Dendritic cell treated with granulocyte-macrophage colony-stimulating factor and Interleukin-4, amounts not matched to agents 40 ng/mL and 50 ng/mL, for 4 days (primary cell): ENCODE measurements at regions of chr18 and their contacts with region 1.

Region 1: DNA sequence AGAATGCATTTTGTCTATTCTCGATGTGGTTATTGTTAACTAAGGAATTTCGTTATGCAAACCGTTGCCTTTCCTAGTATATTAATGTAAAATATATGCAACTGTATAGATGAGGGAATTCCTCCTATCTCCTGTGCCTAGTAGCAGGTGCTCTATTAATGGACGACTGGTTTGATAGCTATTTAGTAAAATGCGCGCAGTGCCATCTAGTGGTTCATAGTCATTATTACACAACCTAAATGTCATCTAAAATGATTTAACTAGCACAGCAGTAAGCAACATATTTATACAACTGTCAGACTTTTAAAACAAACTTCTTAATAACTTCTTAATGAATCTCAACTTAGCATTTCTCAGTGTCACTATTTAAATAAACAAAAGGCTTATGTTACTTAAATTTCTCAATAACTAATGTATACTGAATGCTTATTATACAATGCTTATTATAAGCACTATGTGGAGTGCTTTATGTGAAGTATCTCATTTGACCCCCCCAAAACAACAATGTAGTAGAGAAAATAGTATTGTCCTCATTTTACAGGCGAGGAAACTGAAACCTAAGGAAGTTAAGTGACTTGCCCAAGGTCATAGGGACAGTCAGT is 77.9 kb downstream of the DTNA start:
- H3K4me3 Mint-ChIP-seq: no peak overlapping the region
- H3K27ac Mint-ChIP-seq: no peak overlapping the region
- H3K4me1 Mint-ChIP-seq: peaks cover 4% of the 10 kb centered on the region
- H3K27me3 Mint-ChIP-seq: no peaks in the 10 kb centered on the region

Region 2: GRCh38 chr18:33231474-33232317 is 1556.3 kb before region 1 on chr18:
- intact Hi-C with region 1: loop called (anchors 10 kb)
- H3K4me3 Mint-ChIP-seq: no peak overlapping the region
- H3K27ac Mint-ChIP-seq: no peak overlapping the region
- H3K4me1 Mint-ChIP-seq: no peaks in the 10 kb centered on the region
- H3K27me3 Mint-ChIP-seq: no peaks in the 10 kb centered on the region

Region 3: DNA sequence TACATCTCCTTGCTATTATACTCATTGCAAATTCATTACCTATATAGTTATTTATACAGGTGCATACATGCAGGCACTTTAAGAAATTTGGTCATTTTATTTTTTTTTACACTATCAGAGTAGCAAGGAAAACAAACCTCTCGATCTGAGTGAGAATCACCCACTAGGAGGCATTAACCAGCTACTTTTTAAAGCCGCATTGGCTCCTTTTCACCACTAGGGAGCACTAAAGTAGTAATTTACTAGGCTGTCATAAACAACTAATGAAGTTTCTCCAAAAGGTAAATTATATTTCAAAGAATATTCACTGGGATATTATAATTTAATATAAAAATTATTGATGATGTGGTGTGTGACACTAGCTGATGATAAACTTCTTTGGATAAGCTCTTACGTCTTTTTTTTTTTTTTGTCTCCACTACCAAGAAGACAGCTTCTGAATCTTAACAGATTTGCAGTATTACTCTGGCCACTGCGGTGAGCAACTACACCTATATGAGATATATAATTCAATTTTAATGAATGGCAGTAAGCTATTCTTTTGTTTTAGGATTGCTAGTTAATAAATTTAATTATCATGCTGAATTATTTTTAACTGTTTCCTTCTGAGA is 665.2 kb before region 1 on chr18:
- intact Hi-C with region 1: loop called (anchors 2 kb)
- H3K4me3 Mint-ChIP-seq: no peak overlapping the region
- H3K27ac Mint-ChIP-seq: no peak overlapping the region
- H3K4me1 Mint-ChIP-seq: no peaks in the 10 kb centered on the region
- H3K27me3 Mint-ChIP-seq: no peaks in the 10 kb centered on the region

Region 4: DNA sequence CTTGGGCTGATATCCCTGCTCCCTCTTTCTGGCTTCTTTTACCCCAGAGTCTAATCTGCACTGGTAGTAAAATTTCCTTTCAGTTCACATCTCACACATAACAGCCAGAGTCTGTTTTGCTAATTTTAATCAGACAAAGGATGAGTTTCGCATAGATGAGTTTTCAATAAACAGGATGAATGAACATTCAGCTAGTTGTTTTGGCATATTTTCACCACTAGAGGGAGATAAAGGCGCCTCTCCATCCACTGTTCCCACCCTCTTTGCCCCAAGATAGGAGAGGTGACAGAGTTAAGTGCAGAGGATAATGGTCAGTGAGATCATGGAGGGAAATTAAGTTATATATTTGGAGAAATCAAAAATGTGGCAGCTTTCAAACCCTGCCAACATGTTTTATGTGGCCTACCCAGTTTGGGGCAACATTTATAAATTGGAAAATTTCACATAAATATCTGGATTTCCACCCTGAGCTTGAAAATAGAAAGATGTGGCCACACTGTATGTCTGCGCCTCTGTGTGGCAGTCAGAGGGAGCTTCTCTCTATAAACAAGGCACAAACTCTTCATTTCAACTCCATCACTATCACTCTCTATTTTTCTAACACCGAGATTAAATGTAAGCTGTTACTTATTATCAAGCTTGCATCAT is 126.4 kb before region 1 on chr18:
- intact Hi-C with region 1: loop called (anchors 1 kb)
- H3K4me3 Mint-ChIP-seq: no peak overlapping the region
- H3K27ac Mint-ChIP-seq: no peak overlapping the region
- H3K4me1 Mint-ChIP-seq: peaks cover 10% of the 10 kb centered on the region
- H3K27me3 Mint-ChIP-seq: no peaks in the 10 kb centered on the region

Region 5: GRCh38 chr18:35029770-35030169 is 241.7 kb after region 1 on chr18:
- intact Hi-C with region 1: no loop called
- H3K4me3 Mint-ChIP-seq: peak overlapping the region; percentile 69
- H3K27ac Mint-ChIP-seq: peak overlapping the region; percentile 83
- H3K4me1 Mint-ChIP-seq: peaks cover 17% of the 10 kb centered on the region
- H3K27me3 Mint-ChIP-seq: no peaks in the 10 kb centered on the region